ENCODE measurements at regions of chr19 and their contacts with region 1.

Region 1: DNA sequence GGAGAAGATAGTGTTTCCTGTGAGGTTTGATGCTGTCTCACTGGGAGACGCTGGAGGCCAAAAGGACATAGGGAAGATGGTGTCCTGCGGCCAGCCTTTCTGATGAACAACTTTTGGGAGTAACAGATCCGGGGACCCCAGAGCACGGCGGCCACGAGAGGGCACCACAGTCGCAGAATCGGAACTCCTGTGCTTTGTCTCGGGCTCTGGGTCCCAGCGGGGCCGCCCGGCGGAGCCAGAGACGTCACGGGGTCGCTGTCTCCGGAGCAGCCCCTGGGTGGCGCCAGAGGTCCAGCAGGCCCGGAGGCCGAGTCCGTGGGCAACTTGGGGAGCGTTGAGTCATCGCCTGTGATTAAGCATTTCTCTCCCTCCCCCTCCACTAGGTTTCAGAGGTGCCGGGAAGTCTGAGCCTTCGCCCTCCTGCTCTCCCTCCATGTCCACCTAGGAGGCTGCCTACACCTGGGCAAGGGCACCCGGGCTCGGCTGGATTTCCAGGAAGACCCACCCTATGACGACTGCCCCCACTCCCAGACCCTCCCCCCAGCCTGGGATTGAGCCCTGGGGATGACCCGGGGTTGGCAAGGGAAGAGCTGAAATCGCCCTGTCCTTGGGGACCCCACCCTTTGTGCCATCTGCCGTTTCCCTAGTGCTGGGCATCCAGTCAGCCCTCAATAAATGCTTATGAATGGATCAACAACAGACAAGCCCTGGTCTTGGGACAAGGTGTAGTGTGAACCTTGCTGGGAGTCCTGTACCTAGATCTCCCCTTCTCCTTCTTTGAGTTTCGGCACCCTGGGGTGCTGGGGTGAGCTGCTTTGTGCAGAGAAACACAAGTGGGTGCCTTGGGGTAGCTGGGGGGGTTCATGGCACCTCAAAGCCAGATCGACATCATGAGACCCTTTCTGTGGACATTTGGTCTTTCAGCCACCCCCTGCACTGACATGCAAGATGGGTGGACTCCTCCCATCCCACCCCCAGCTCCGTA is 3.4 kb downstream of the NANOS3 start:
- DNase-seq: peak; percentile 96 to 98 (median 98)
- H3K4me3 ChIP-seq: peak overlapping the region in 2 of 3 experiments; percentile 27 to 64
- H3K4me3 Mint-ChIP-seq: peak overlapping the region; percentile 60 to 78
- H3K27ac ChIP-seq: peak overlapping the region; percentile 50 to 74
- H3K27ac Mint-ChIP-seq: peak overlapping the region; percentile 60 to 93 (median 82)
- H3K4me1 ChIP-seq: peaks cover 31 to 40% of the 10 kb centered on the region in 2 donors
- H3K4me1 Mint-ChIP-seq: peaks cover 33% of the 10 kb centered on the region
- H3K27me3 ChIP-seq: peaks cover 0 to 8% of the 10 kb centered on the region in 2 donors
- H3K27me3 Mint-ChIP-seq: peaks cover 3 to 37% (median 12%) of the 10 kb centered on the region in 3 donors
- CTCF ChIP-seq: peak; percentile 98

Region 2: DNA sequence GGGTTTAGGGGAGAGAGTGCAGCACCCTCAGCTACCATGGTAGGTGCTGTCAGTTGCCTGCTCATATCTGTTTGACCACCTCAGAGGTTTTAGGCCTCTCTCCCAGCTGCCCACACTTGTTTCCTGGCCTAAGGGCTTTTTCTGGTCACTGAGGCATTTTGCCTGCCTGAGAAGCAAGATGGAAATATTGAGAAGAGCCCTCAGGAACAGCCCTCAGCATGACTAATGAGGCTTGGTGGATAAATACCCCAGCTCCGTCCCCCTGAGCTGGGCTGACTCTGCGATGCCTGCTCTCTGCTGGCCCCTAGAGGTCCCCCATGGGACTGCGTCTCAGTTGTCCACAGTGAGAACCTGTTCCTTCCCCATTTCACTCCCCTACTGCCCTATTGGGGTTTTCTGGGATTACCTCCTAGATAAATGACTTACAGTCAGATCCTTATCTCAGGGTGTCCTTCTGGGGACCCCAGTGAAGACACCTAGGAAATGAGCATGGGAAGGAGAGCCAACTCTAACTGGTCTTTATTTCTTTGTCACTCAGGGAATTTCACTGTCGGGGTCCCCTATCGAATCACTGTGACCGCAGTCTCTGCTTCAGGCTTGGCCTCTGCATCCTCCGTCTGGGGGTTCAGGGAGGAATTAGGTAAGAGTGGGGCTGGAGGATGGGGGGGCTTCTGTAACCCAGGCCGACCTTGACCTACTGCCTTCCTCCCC is 168.2 kb after region 1 on chr19:
- intact Hi-C with region 1: loop called in 1 of 2 experiments (anchors 10 kb)
- DNase-seq: peak; percentile 63 to 80 (median 76)
- H3K4me3 ChIP-seq: no peak overlapping the region
- H3K4me3 Mint-ChIP-seq: no peak overlapping the region
- H3K27ac ChIP-seq: no peak overlapping the region
- H3K27ac Mint-ChIP-seq: peak overlapping the region in 3 of 7 donors; percentile 36 to 85 (median 48)
- H3K4me1 ChIP-seq: no peaks in the 10 kb centered on the region
- H3K4me1 Mint-ChIP-seq: peaks cover 11% of the 10 kb centered on the region
- H3K27me3 ChIP-seq: no peaks in the 10 kb centered on the region
- H3K27me3 Mint-ChIP-seq: peaks cover 2 to 4% (median 4%) of the 10 kb centered on the region in 3 donors
- CTCF ChIP-seq: peak; percentile 98

Region 3: GRCh38 chr19:14073261-14073924 is 193.0 kb after region 1 on chr19:
- intact Hi-C with region 1: loop called (anchors 2 to 5 kb)
- DNase-seq: peak; percentile 65 to 66 (median 66)
- H3K4me3 ChIP-seq: peak overlapping the region; percentile 50 to 95 (median 67)
- H3K4me3 Mint-ChIP-seq: peak overlapping the region; percentile 97 to 99
- H3K27ac ChIP-seq: peak overlapping the region; percentile 27 to 56
- H3K27ac Mint-ChIP-seq: peak overlapping the region in 4 of 7 donors; percentile 79 to 89 (median 87)
- H3K4me1 ChIP-seq: peaks cover 61 to 67% of the 10 kb centered on the region in 2 donors
- H3K4me1 Mint-ChIP-seq: peaks cover 46% of the 10 kb centered on the region
- H3K27me3 ChIP-seq: peaks cover 0 to 22% of the 10 kb centered on the region in 2 donors
- H3K27me3 Mint-ChIP-seq: peaks cover 18 to 45% (median 34%) of the 10 kb centered on the region in 3 donors
- CTCF ChIP-seq: peak; percentile 58

Region 4: DNA sequence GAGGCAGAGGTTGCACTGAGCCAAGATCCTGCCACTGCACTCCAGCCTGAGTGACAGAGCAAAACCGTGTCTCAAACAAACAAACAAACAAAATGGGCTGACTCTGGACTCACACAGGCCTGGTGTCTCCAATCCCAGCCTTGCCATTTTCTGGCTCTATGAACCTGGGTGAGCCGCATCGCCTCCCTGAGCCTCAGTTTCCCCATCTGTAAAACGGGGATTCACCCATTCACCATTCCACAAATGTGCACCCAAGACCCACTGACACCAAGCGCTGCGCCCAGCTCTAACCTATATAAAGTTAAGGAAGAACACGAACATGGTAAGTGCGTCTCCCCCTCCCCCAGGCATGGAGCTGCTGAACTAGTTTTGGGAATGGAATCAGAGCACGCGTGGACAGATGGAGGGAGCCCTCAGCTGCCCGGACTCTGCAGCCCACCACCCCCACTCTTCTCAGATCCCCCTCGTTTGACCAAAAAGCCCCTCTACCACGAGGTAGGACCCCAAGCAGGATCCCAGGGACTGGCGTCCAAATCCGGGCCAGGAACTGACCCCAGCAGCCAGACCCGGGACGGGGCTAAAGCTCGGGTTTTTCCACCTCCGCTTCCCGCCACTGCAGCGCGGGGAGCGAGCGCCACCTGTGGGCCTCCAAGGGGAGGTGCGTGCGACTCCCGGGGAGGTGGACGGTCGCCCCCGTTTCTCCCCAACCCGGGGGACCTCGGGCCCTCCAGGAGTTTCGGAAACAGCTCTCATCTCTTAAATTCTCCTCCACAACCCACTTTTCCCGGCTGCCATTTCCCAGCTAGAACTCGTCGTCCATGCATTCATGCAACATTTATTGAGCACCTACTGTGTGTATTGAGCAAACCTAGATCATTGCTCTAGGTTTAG is 467.9 kb after region 1 on chr19:
- intact Hi-C with region 1: loop called in 1 of 2 experiments (anchors 10 kb)
- DNase-seq: peak; percentile 48 to 66 (median 59)
- H3K4me3 ChIP-seq: peak overlapping the region in 1 of 3 experiments; percentile 61
- H3K4me3 Mint-ChIP-seq: peak overlapping the region; percentile 48 to 67
- H3K27ac ChIP-seq: no peak overlapping the region
- H3K27ac Mint-ChIP-seq: no peak overlapping the region
- H3K4me1 ChIP-seq: peaks cover 12 to 15% of the 10 kb centered on the region in 2 donors
- H3K4me1 Mint-ChIP-seq: peaks cover 24% of the 10 kb centered on the region
- H3K27me3 ChIP-seq: no peaks in the 10 kb centered on the region
- H3K27me3 Mint-ChIP-seq: peaks cover 3 to 12% (median 9%) of the 10 kb centered on the region in 3 donors
- CTCF ChIP-seq: peak; percentile 98